MCF 10A (cell line): ENCODE measurements at regions of chr12 and their contacts with region 1.

Region 1: GRCh38 chr12:120971299-120972179 is 6.8 kb upstream of the HNF1A start:
- DNase-seq: peak; percentile 69
- H3K4me3 Mint-ChIP-seq: no peak overlapping the region
- H3K27ac Mint-ChIP-seq: no peak overlapping the region
- H3K4me1 Mint-ChIP-seq: peaks cover 8% of the 10 kb centered on the region
- H3K27me3 Mint-ChIP-seq: no peaks in the 10 kb centered on the region
- CTCF ChIP-seq: peak; percentile 73

Region 2: GRCh38 chr12:120437754-120438494 is 533.6 kb before region 1 on chr12 and contains the start of gene COX6A1:
- CTCF ChIA-PET with region 1: no interaction called
- POLR2A ChIA-PET with region 1: no interaction called
- intact Hi-C with region 1: loop called (anchors 10 kb)
- DNase-seq: peak; percentile 98
- H3K4me3 Mint-ChIP-seq: peak within 1 kb of the TSS; percentile 98
- H3K27ac Mint-ChIP-seq: peak within 1 kb of the TSS; percentile 92
- H3K4me1 Mint-ChIP-seq: peaks cover 6% of the 10 kb centered on the region
- H3K27me3 Mint-ChIP-seq: no peaks in the 10 kb centered on the region
- CTCF ChIP-seq: no peak
- total RNA-seq, gene COX6A1: 475 and 518 TPM in 2 replicates

Region 3: GRCh38 chr12:120658286-120659150 is 313.0 kb before region 1 on chr12:
- CTCF ChIA-PET with region 1: interaction called, 14 read pairs
- POLR2A ChIA-PET with region 1: no interaction called
- intact Hi-C with region 1: no loop called
- DNase-seq: no peak
- H3K4me3 Mint-ChIP-seq: no peak overlapping the region
- H3K27ac Mint-ChIP-seq: no peak overlapping the region
- H3K4me1 Mint-ChIP-seq: no peaks in the 10 kb centered on the region
- H3K27me3 Mint-ChIP-seq: peaks cover 1% of the 10 kb centered on the region
- CTCF ChIP-seq: no peak

Region 4: DNA sequence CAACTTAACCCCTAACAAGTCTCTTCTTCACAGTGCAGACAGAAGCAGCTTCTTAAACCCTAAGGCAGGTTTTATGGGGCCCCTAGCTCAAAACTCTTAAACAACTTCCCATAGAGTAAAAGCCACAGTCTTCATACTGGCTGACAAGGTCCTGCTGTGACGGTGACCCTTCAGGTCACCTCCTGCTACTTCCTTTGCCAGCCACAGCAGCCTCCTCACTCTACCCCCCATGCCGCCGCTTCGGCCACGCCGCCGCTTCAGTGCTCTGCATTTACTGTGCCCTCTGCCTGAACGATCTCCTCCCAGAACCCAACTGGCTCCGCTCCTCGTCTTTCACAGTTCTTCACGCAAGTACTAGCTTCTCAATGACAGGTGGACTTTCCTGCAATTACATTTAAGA is 200.4 kb before region 1 on chr12:
- CTCF ChIA-PET with region 1: interaction called, 12 read pairs
- POLR2A ChIA-PET with region 1: no interaction called
- intact Hi-C with region 1: no loop called
- DNase-seq: no peak
- H3K4me3 Mint-ChIP-seq: no peak overlapping the region
- H3K27ac Mint-ChIP-seq: no peak overlapping the region
- H3K4me1 Mint-ChIP-seq: no peaks in the 10 kb centered on the region
- H3K27me3 Mint-ChIP-seq: no peaks in the 10 kb centered on the region
- CTCF ChIP-seq: no peak

Region 5: GRCh38 chr12:120847814-120848213 is 123.7 kb before region 1 on chr12:
- CTCF ChIA-PET with region 1: interaction called, 12 read pairs
- POLR2A ChIA-PET with region 1: no interaction called
- intact Hi-C with region 1: no loop called
- DNase-seq: no peak
- H3K4me3 Mint-ChIP-seq: no peak overlapping the region
- H3K27ac Mint-ChIP-seq: no peak overlapping the region
- H3K4me1 Mint-ChIP-seq: peaks cover 17% of the 10 kb centered on the region
- H3K27me3 Mint-ChIP-seq: no peaks in the 10 kb centered on the region
- CTCF ChIP-seq: no peak

Region 6: DNA sequence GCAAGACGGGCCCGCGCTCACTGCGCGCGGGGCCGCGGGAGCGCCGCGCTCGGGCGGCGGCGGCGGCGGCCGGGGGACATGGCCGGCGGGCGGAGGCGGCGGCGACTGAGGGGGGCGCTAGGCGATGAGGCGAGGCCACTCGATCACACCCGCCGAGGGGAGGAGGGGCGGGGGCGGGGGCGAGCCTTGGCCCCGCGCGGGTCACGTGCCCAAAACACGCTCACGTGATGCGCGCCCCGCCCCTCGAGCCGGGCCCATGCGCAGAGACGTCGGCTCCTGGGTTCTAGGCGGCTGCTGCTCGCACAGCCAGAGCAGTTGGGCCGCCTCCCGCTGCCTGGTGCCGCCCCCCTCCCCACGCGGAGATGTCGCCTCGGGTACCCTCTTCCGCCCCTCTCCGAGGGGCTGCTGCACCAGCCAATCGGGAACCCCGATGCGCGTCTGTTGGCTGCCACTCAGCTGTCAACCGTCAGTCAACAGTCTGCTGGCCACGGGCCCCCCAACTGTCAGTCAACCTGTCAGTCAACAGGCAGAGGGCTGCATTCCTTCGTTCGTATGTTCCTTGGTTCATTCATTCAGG is 67.3 kb before region 1 on chr12 and contains the start of gene SPPL3:
- CTCF ChIA-PET with region 1: interaction called, 21 read pairs
- POLR2A ChIA-PET with region 1: interaction called, 5 read pairs
- intact Hi-C with region 1: no loop called
- DNase-seq: peak; percentile 86
- H3K4me3 Mint-ChIP-seq: peak within 1 kb of the TSS; percentile 100
- H3K27ac Mint-ChIP-seq: peak within 1 kb of the TSS; percentile 94
- H3K4me1 Mint-ChIP-seq: peaks cover 39% of the 10 kb centered on the region
- H3K27me3 Mint-ChIP-seq: no peaks in the 10 kb centered on the region
- CTCF ChIP-seq: no peak
- total RNA-seq, gene SPPL3: 32.6 and 43.7 TPM in 2 replicates

Region 7: GRCh38 chr12:121214855-121215745 is 243.6 kb after region 1 on chr12:
- CTCF ChIA-PET with region 1: no interaction called
- POLR2A ChIA-PET with region 1: no interaction called
- intact Hi-C with region 1: no loop called
- DNase-seq: peak; percentile 87
- H3K4me3 Mint-ChIP-seq: no peak overlapping the region
- H3K27ac Mint-ChIP-seq: peak overlapping the region; percentile 2
- H3K4me1 Mint-ChIP-seq: peaks cover 17% of the 10 kb centered on the region
- H3K27me3 Mint-ChIP-seq: no peaks in the 10 kb centered on the region
- CTCF ChIP-seq: no peak